Activated B cell treated with CpG ODN at 0.5 μM for 24 hours (primary cell): ENCODE measurements at regions of chr2 and their contacts with region 1.

Region 1: GRCh38 chr2:20525041-20526035 is 78.5 kb downstream of the RHOB start:
- DNase-seq: peak; percentile 40
- ATAC-seq: peak; percentile 94
- H3K4me3 Mint-ChIP-seq: peak overlapping the region; percentile 76
- H3K27ac Mint-ChIP-seq: peak overlapping the region; percentile 41
- H3K4me1 Mint-ChIP-seq: peaks cover 21% of the 10 kb centered on the region
- H3K27me3 Mint-ChIP-seq: no peaks in the 10 kb centered on the region
- CTCF ChIP-seq: no peak

Region 2: DNA sequence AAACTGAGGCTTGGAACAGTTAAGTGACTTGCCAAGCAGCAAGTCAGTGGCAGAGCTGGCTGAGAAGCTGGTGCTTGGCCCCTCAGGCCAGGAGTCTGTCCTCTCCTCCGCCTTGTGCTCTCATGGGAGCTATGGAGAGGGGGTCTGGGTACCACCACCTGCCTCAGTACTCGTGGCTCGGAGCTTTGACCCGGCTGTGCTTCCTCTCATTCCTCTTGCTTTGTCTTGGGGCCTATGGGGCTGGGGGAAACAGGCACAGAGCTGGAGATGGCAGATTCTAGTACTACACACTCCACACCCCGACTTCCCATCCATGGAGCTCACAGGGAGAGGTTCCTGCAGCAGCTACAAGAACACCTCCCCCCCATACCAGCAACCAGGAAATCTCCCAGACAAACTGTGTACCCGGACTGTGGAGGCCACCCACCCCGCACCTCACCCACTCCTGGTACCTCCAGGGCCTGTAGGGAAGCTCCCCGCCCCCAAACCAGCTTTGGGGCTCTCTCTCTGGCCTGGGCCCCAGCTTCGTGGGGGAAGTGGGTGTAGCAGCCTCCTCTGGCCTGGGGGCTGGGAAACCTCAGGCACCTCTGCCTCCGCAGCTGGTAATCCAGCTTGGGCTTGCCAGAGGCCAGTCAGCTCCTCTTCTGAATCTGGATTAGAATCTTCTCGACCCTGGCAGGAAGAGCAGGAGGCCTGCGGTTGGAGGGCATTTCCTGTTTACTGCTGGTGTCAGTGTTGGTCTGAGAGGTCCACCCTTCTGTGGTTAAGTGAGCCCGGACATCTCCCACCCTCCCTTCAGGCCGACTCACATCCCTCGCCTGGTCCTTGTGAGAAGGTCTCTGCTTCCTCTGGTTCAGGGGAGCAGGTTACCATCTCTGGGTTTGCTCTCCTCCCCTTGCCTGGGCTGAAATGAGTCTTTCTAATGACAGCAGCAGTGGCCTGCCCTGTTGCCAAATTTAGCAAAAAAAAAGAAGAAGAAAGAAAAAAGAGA is 100.7 kb before region 1 on chr2:
- CTCF ChIA-PET with region 1: no interaction called
- POLR2A ChIA-PET with region 1: no interaction called
- intact Hi-C with region 1: no loop called
- DNase-seq: no peak
- ATAC-seq: peak; percentile 53
- H3K4me3 Mint-ChIP-seq: peak overlapping the region; percentile 72
- H3K27ac Mint-ChIP-seq: peak overlapping the region; percentile 83
- H3K4me1 Mint-ChIP-seq: peaks cover 58% of the 10 kb centered on the region
- H3K27me3 Mint-ChIP-seq: no peaks in the 10 kb centered on the region
- CTCF ChIP-seq: no peak

Region 3: GRCh38 chr2:20490260-20491181 is 34.8 kb before region 1 on chr2:
- CTCF ChIA-PET with region 1: no interaction called
- POLR2A ChIA-PET with region 1: no interaction called
- intact Hi-C with region 1: no loop called
- DNase-seq: no peak
- ATAC-seq: no peak
- H3K4me3 Mint-ChIP-seq: no peak overlapping the region
- H3K27ac Mint-ChIP-seq: no peak overlapping the region
- H3K4me1 Mint-ChIP-seq: no peaks in the 10 kb centered on the region
- H3K27me3 Mint-ChIP-seq: peaks cover 2% of the 10 kb centered on the region
- CTCF ChIP-seq: no peak

Region 4: GRCh38 chr2:20514596-20515269 is 10.6 kb before region 1 on chr2:
- CTCF ChIA-PET with region 1: no interaction called
- POLR2A ChIA-PET with region 1: no interaction called
- intact Hi-C with region 1: no loop called
- DNase-seq: no peak
- ATAC-seq: no peak
- H3K4me3 Mint-ChIP-seq: no peak overlapping the region
- H3K27ac Mint-ChIP-seq: no peak overlapping the region
- H3K4me1 Mint-ChIP-seq: no peaks in the 10 kb centered on the region
- H3K27me3 Mint-ChIP-seq: peaks cover 2% of the 10 kb centered on the region
- CTCF ChIP-seq: no peak

Region 5: DNA sequence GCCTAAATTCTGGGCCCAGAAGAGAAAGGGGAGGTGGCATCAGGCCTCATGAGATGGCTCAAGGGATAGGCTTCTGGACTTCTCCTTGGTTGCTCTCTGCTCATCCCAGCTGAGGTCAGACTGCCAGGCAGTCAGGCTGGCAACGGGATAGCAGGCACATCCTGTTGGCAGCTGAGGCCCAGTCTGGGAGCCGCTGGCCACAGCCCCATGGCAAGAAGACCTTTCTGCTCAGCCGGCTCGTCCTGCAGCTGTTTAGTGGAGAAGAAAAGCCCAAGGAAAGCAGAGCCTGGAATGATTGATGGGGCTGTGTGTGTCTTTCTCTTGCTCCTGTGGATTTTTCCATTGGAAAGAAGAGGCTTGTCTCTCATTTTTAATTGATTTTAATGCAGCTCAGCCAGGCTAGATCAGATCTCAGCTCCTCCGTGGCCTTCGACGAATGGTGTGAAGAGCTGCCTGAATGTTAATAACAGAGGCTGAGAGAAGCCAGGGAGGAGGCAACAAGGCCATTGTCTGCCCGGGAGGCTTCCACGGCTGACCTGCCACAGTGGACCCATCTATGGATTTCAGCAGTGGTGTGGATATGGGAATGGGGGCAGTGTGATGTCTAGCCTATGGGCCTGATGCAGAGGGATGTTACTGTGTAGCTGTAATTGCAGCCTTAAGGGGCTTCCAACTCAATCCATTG is 26.1 kb after region 1 on chr2:
- CTCF ChIA-PET with region 1: no interaction called
- POLR2A ChIA-PET with region 1: no interaction called
- intact Hi-C with region 1: no loop called
- DNase-seq: no peak
- ATAC-seq: no peak
- H3K4me3 Mint-ChIP-seq: no peak overlapping the region
- H3K27ac Mint-ChIP-seq: no peak overlapping the region
- H3K4me1 Mint-ChIP-seq: peaks cover 3% of the 10 kb centered on the region
- H3K27me3 Mint-ChIP-seq: no peaks in the 10 kb centered on the region
- CTCF ChIP-seq: no peak

Region 6: DNA sequence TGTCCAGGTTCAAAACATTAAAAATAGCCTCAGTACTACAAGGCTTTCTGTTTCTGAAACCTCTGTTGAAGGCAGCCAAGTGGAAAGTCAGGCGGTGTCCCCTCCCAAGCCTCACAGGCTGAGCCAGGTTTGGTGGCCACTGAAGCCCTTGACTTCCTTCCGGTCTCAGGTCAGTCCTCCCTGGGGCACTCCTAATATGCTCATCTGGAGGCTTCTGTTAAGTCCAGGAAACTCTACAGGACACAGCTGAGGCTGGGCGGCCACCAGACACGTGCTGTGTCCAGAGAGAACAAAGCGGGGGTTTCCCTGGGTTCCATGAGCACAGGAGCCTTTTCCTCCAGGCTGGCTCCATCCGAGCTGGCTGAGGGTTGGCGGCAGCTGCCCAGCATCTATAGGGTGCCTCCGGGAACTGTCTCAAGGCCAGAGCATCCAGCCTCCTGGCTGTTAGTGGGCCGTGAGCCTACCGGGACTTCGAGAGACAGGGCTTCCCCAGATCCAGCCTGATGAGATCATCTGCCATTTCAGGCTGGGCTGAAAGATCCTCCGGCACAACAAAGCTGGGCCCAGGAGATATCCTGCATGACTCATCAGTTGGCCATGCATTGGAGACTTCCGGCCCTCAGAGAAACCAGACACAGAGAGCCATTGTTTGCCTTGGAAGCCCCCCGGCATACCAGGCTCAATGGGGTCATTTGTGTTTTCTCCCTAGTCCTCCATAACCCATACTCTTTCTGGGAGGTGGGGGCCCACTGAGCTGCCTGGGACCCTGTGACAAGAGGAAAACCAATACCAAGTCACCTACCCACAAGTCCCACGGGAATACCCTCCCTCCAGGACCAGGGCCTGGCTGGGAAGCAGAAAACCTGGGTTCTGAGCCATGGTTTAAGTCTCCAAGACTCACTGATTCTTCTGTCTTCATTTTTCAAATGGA is 53.8 kb after region 1 on chr2:
- CTCF ChIA-PET with region 1: no interaction called
- POLR2A ChIA-PET with region 1: no interaction called
- intact Hi-C with region 1: loop called (anchors 1 kb)
- DNase-seq: no peak
- ATAC-seq: no peak
- H3K4me3 Mint-ChIP-seq: no peak overlapping the region
- H3K27ac Mint-ChIP-seq: no peak overlapping the region
- H3K4me1 Mint-ChIP-seq: peaks cover 31% of the 10 kb centered on the region
- H3K27me3 Mint-ChIP-seq: no peaks in the 10 kb centered on the region
- CTCF ChIP-seq: no peak